ENCODE measurements at regions of chr18 and their contacts with region 1.

Region 1: GRCh38 chr18:58529714-58530354 is 99.1 kb downstream of the ALPK2 start:
- H3K4me3 ChIP-seq: no peak overlapping the region
- H3K27ac ChIP-seq: no peak overlapping the region
- H3K4me1 ChIP-seq: no peaks in the 10 kb centered on the region
- CTCF ChIP-seq: peak; percentile 65

Region 2: DNA sequence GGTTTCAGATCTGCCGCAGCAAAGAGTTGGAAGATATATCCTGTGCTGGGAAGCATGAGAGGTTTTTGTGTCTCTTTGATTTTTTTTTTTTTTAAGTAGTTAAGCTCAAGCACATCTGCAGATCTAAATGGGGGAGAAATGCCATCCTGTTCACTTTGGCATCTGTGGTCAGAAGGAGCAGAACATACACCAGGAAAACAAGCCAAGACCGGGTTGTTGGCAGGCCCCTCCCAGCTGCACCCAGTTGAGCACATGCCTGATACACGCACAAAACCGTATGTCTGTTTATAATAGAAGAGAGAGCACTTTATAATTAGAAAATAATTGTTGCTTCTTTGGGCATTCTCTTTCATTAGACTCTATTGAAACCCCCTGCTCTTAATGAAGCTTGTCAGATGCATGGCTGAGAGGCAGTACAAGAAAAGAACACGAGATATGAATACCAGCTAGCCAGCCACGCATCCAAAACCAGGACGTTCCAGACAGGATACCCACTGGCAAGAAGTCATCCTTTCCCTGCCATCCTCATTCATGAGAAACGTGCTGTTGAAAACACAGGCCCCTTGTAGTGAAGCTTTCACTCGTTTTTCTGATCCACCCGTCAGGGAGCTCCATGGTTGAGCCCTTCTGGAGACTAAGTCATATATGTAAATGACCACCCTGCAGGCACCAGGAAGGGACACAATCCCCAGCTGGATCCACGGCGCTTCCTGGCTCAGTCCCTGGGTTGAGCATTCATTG is 53.1 kb before region 1 on chr18:
- CTCF ChIA-PET with region 1: no interaction called
- POLR2A ChIA-PET with region 1: no interaction called
- H3K4me3 ChIP-seq: no peak overlapping the region
- H3K27ac ChIP-seq: no peak overlapping the region
- H3K4me1 ChIP-seq: no peaks in the 10 kb centered on the region
- CTCF ChIP-seq: no peak

Region 3: GRCh38 chr18:58541789-58542425 is 12.1 kb after region 1 on chr18:
- CTCF ChIA-PET with region 1: interaction called, 40 read pairs
- POLR2A ChIA-PET with region 1: no interaction called
- H3K4me3 ChIP-seq: no peak overlapping the region
- H3K27ac ChIP-seq: no peak overlapping the region
- H3K4me1 ChIP-seq: peaks cover 5% of the 10 kb centered on the region
- CTCF ChIP-seq: no peak

Region 4: GRCh38 chr18:58754544-58755068 is 224.8 kb after region 1 on chr18:
- CTCF ChIA-PET with region 1: interaction called, 363 read pairs
- POLR2A ChIA-PET with region 1: no interaction called
- H3K4me3 ChIP-seq: no peak overlapping the region
- H3K27ac ChIP-seq: no peak overlapping the region
- H3K4me1 ChIP-seq: no peaks in the 10 kb centered on the region
- CTCF ChIP-seq: no peak